ENCODE measurements at regions of chr7 and their contacts with region 1.

Region 1: DNA sequence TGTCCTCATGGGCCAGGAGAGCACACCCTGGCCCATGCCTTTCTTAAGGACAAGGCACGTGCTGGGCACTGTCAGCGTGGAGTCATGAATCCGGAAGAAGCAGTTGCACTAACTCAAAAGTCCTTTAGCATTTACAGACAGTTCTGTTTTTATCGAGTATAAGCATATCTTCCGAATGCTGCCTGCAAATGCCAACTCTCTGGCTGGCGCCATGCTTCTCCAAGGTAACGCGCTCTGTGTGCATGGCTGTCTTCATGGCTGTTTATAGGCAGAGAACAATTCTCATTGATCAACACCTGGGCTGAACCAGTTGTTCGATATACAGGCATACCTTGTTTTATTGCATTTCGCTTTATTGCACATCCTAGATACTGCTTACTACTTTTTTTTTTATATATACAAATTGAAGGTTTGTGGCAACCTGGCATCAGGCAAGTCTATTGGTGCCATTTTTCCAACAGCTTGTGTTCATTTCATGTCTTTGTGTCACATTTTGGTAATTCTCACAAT is 28.0 kb upstream of the ZNRF2 start:
- DNase-seq: no peak
- H3K4me3 ChIP-seq: no peak overlapping the region
- H3K27ac ChIP-seq: no peak overlapping the region
- H3K4me1 ChIP-seq: no peaks in the 10 kb centered on the region
- CTCF ChIP-seq: no peak

Region 2: DNA sequence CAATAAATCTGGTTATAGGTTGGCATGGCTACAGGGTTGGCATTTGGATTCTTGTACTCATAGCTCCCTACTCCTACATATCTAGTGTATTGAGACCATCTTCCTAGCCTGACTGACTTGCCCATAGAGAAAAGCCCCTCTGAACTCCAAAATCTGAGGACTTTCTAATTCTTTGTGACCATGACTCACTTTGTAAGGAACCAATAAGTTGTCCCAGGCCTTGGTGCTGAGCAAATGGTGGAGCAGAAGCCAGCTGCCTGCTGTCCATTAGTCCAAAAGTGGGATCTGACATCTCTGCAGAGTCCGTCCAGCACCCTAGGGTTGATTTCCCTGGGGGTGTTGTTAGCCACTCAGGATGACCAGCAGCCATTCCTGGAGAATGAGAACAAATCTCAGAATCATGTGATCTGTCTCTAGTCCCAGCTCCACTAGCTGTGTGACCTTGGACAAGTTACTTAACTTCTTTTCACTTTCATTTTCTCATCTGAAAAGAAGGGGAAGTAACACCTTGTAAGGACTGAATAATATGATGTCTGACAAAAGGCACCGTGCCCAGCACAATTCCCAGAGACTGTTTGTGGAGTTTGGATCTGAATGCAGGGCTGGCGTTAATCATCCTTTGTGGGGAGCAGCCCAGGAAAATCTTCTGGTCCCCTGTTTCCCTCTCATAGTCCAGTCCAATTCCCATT is 77.5 kb before region 1 on chr7:
- CTCF ChIA-PET with region 1: no interaction called
- POLR2A ChIA-PET with region 1: interaction called, 11 read pairs
- intact Hi-C with region 1: no loop called
- DNase-seq: peak; percentile 69
- H3K4me3 ChIP-seq: peak overlapping the region; percentile 43
- H3K27ac ChIP-seq: peak overlapping the region; percentile 8
- H3K4me1 ChIP-seq: peaks cover 28% of the 10 kb centered on the region
- CTCF ChIP-seq: no peak

Region 3: GRCh38 chr7:30214651-30215137 is 41.7 kb before region 1 on chr7:
- CTCF ChIA-PET with region 1: no interaction called
- POLR2A ChIA-PET with region 1: no interaction called
- intact Hi-C with region 1: no loop called
- DNase-seq: no peak
- H3K4me3 ChIP-seq: no peak overlapping the region
- H3K27ac ChIP-seq: no peak overlapping the region
- H3K4me1 ChIP-seq: peaks cover 10% of the 10 kb centered on the region
- CTCF ChIP-seq: no peak

Measured in OCI-LY7 (cell line).